PC-9 (cell line): ENCODE measurements at regions of chr12 and their contacts with region 1.

Region 1: GRCh38 chr12:44465139-44465538 is 411.0 kb downstream of the NELL2 start:
- DNase-seq: no peak
- H3K4me3 ChIP-seq: no peak overlapping the region
- H3K27ac ChIP-seq: no peak overlapping the region
- H3K4me1 ChIP-seq: no peaks in the 10 kb centered on the region
- H3K27me3 ChIP-seq: no peaks in the 10 kb centered on the region
- CTCF ChIP-seq: peak; percentile 9; the same call in 1 of the 2 replicates

Region 2: GRCh38 chr12:43957732-43958372 is 507.3 kb before region 1 on chr12:
- CTCF ChIA-PET with region 1: no interaction called
- POLR2A ChIA-PET with region 1: no interaction called
- intact Hi-C with region 1: loop called (anchors 5 kb)
- DNase-seq: peak in 1 of 2 experiments; percentile 10
- H3K4me3 ChIP-seq: no peak overlapping the region
- H3K27ac ChIP-seq: no peak overlapping the region
- H3K4me1 ChIP-seq: no peaks in the 10 kb centered on the region
- H3K27me3 ChIP-seq: no peaks in the 10 kb centered on the region
- CTCF ChIP-seq: peak; percentile 70